Psoas muscle (tissue), 8 donors: ENCODE measurements at regions of chr3 and their contacts with region 1.

Region 1: GRCh38 chr3:73855813-73856514 is 231.2 kb upstream of the PDZRN3 start:
- DNase-seq: no peak
- ATAC-seq: no peak
- H3K4me3 ChIP-seq: no peak overlapping the region
- H3K27ac ChIP-seq: no peak overlapping the region
- H3K4me1 ChIP-seq: no peaks in the 10 kb centered on the region
- H3K27me3 ChIP-seq: no peaks in the 10 kb centered on the region
- CTCF ChIP-seq: no peak

Region 2: DNA sequence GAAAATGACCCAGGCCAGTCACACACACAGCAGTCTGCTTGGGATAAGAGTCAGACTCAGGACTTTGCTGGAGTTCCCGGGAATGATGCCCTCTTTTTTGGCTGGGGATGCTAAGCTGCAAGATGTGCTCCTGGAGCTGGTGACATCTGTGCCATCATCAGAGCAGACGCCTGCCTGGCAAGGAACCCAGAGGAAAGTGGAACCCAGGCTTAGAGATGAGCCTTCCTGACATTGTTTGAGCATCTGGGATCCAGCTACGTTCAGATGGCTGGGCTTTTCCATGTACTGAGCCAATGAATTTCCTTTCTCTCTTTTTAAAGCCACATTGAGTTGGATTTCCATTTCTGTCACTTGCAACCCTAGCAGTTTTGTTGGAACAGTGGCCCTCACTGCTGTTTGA is 741.3 kb before region 1 on chr3:
- intact Hi-C with region 1: loop called (anchors 10 kb)
- DNase-seq: no peak
- ATAC-seq: no peak
- H3K4me3 ChIP-seq: no peak overlapping the region
- H3K27ac ChIP-seq: no peak overlapping the region
- H3K4me1 ChIP-seq: no peaks in the 10 kb centered on the region
- H3K27me3 ChIP-seq: no peaks in the 10 kb centered on the region
- CTCF ChIP-seq: no peak

Region 3: DNA sequence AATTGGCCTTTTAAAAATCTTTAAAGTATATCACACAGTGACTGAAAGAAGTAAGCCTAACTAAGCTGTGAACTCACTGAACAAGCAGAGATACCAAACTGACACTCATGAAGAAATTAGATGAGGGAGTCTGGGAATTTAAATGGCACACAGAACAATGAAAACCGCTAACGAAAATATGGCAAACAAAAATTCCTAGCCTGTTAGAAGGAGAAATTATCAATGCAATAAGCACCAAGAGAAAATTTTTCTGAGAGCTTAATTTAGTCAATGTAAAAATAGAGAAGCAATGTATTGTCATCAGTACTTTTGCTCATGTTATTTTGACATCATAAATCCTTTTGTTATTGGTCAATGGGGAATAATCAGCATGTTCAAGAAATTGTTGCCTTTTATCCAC is 59.9 kb after region 1 on chr3:
- intact Hi-C with region 1: no loop called
- DNase-seq: no peak
- ATAC-seq: no peak
- H3K4me3 ChIP-seq: no peak overlapping the region
- H3K27ac ChIP-seq: no peak overlapping the region
- H3K4me1 ChIP-seq: no peaks in the 10 kb centered on the region
- H3K27me3 ChIP-seq: no peaks in the 10 kb centered on the region
- CTCF ChIP-seq: no peak